A549 (cell line): ENCODE measurements at regions of chr15 and their contacts with region 1.

Region 1: DNA sequence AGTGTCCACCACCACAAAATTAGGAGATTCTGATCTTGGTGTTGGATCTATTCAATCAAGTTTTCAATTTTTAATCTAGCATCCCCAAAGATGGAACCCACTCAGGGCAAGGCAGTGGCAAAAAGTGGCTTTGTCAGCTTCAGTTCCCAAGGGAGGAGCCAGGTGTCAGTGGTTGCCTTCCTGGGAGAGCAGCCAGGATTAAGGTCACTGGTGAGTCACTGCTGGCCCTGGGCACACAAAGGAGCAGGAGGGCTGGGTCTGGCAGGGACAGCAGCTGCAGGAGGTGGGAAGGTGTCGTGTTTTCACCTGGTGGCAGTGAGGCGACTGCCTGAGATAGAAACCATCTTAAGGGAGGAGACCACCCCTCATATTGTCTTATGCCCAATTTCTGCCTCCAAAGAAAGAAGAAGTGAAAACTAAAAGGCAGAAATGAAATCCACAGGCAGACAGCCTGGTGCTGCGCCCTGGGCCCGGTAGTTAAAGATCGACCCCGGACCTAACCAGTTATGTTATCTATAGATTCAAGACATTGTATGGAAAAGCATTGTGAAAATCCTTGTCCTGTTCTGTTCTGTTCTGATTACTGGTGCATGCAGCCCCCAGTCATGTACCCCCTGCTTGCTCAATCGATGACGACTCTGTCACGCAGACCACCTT is 5.9 kb upstream of the KLHL25 start:
- DNase-seq: peak; percentile 87 to 91
- ATAC-seq: peak; percentile 95 to 98
- H3K4me3 ChIP-seq: no peak overlapping the region
- H3K27ac ChIP-seq: peak overlapping the region in 1 of 2 experiments; percentile 47; a peak in 3 of 6 replicates
- H3K4me1 ChIP-seq: peaks cover 15% of the 10 kb centered on the region
- CTCF ChIP-seq: peak; percentile 33
- EP300 ChIP-seq: no peak
- POLR2A ChIP-seq: no peak
- RAD21 ChIP-seq: peak; percentile 56 to 66

Region 2: GRCh38 chr15:85646538-85647091 is 154.0 kb before region 1 on chr15:
- CTCF ChIA-PET with region 1: no interaction called
- POLR2A ChIA-PET with region 1: no interaction called
- DNase-seq: no peak
- ATAC-seq: no peak
- H3K4me3 ChIP-seq: no peak overlapping the region
- H3K27ac ChIP-seq: no peak overlapping the region
- H3K4me1 ChIP-seq: peaks cover 14% of the 10 kb centered on the region; the same call in 2 of the 3 replicates
- CTCF ChIP-seq: no peak
- EP300 ChIP-seq: no peak
- POLR2A ChIP-seq: no peak
- RAD21 ChIP-seq: no peak

Region 3: DNA sequence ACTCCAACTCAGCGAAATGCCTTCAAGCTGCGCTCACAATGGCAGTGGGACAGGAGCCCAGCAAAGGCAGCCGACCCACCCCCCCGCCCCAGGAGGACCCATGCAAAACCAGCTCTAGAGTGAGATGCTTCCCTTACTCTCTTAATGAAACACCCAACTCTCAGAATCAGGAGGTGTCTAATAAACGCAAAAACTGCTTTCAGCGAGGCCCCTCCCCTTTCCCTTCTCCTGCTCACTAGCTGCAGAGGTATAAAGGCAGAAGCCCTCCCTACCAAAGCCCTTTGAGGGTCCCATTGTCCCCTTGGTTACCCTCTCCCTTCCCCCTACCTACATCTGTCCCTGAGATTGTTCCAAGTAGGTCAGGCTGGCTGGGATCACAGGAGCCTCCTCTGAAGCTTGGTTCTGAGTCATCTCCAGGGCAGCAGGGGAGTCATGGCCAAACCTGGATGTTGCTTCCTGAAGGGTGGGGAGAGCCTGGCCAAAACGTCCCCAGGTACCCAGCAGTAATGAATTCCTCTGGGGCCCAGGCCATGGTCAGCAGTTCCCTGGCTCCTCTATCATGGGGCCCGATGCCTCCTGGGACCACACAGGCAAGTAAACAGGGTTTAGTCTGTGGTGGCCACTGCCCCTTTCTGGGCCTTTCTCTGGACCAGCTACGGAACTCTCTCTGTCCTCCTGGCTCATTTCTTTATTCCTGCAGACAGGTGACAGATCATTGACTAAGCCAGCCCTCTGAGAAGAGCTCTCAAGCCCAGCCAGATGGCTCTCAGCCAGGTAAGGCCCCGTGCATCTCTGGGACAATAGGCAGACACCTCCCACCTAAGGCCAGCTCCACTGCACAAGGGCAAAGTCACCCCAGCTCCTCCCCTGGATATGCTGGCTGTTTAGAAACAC is 14.5 kb before region 1 on chr15:
- CTCF ChIA-PET with region 1: interaction called, 43 read pairs
- POLR2A ChIA-PET with region 1: no interaction called
- DNase-seq: peak; percentile 31 to 83
- ATAC-seq: peak; percentile 85 to 88
- H3K4me3 ChIP-seq: no peak overlapping the region
- H3K27ac ChIP-seq: peak overlapping the region; percentile 41 to 76; a peak in 5 of 6 replicates
- H3K4me1 ChIP-seq: peaks cover 19% of the 10 kb centered on the region
- CTCF ChIP-seq: no peak
- EP300 ChIP-seq: no peak
- POLR2A ChIP-seq: no peak
- RAD21 ChIP-seq: no peak

Region 4: GRCh38 chr15:85831415-85832113 is 31.0 kb after region 1 on chr15:
- CTCF ChIA-PET with region 1: interaction called, 20 read pairs
- POLR2A ChIA-PET with region 1: no interaction called
- DNase-seq: peak; percentile 50 to 54
- ATAC-seq: peak; percentile 90 to 97
- H3K4me3 ChIP-seq: no peak overlapping the region
- H3K27ac ChIP-seq: no peak overlapping the region
- H3K4me1 ChIP-seq: peaks cover 3% of the 10 kb centered on the region
- CTCF ChIP-seq: peak; percentile 68
- EP300 ChIP-seq: no peak
- POLR2A ChIP-seq: no peak
- RAD21 ChIP-seq: peak; percentile 68 to 78